Calu3 (cell line): ENCODE measurements at regions of chr14 and their contacts with region 1.

Region 1: GRCh38 chr14:22265319-22266137 is 323.5 kb downstream of the DAD1 start:
- DNase-seq: peak; percentile 35
- H3K4me3 Mint-ChIP-seq: peak overlapping the region; percentile 22
- H3K27ac Mint-ChIP-seq: peak overlapping the region; percentile 60
- H3K4me1 Mint-ChIP-seq: peaks cover 69% of the 10 kb centered on the region
- H3K27me3 Mint-ChIP-seq: no peaks in the 10 kb centered on the region
- CTCF ChIP-seq: no peak

Region 2: GRCh38 chr14:22296722-22297121 is 31.2 kb after region 1 on chr14:
- CTCF ChIA-PET with region 1: no interaction called
- intact Hi-C with region 1: loop called (anchors 2 kb)
- DNase-seq: peak; percentile 42
- H3K4me3 Mint-ChIP-seq: no peak overlapping the region
- H3K27ac Mint-ChIP-seq: no peak overlapping the region
- H3K4me1 Mint-ChIP-seq: peaks cover 23% of the 10 kb centered on the region
- H3K27me3 Mint-ChIP-seq: peaks cover 14% of the 10 kb centered on the region
- CTCF ChIP-seq: no peak

Region 3: DNA sequence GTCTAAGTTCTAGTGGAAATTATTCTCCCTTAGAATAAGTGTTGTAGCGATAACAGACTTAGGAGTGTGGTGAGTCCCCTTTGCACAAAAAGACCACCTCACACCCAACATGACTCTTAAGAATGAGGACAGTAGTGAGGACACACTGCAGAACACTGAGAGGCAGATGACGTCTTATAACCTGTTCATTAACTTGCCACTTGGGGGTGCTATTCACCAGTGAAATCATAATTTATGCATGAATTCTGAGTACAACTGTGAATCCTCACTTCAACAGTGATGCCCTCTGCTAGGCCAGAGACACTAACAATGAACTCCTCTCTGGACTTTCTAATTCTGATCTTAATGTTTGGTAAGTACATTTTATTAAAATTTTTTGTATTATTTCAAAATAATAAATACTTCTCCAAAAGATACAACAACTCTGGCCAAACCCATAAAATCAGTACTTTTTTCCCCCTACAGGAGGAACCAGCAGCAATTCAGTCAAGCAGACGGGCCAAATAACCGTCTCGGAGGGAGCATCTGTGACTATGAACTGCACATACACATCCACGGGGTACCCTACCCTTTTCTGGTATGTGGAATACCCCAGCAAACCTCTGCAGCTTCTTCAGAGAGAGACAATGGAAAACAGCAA is 48.8 kb after region 1 on chr14:
- CTCF ChIA-PET with region 1: no interaction called
- intact Hi-C with region 1: loop called (anchors 1 kb)
- DNase-seq: peak; percentile 57
- H3K4me3 Mint-ChIP-seq: no peak overlapping the region
- H3K27ac Mint-ChIP-seq: no peak overlapping the region
- H3K4me1 Mint-ChIP-seq: no peaks in the 10 kb centered on the region
- H3K27me3 Mint-ChIP-seq: no peaks in the 10 kb centered on the region
- CTCF ChIP-seq: peak; percentile 41

Region 4: DNA sequence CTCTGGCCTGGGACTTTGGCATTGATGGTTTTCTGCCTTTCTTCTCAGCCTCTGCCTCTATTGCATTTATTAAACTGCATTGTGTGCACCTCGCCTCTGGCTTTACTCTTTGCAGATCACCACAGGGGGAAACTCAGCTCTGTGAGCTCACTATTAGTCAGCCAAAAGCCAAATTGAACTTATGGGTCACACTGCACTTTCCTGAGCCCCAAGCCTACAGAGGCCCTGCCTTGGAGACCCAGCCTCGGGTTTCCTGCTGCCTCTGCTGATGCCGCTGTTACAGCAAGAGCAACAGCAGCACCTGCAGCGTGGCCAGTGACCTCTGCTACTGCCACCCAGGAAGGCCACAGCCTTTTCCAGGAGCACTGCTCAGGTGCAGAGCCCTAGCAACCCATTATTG is 201.0 kb after region 1 on chr14:
- CTCF ChIA-PET with region 1: no interaction called
- intact Hi-C with region 1: no loop called
- DNase-seq: no peak
- H3K4me3 Mint-ChIP-seq: no peak overlapping the region
- H3K27ac Mint-ChIP-seq: no peak overlapping the region
- H3K4me1 Mint-ChIP-seq: peaks cover 2% of the 10 kb centered on the region
- H3K27me3 Mint-ChIP-seq: no peaks in the 10 kb centered on the region
- CTCF ChIP-seq: no peak